AG04449 (cell line): ENCODE measurements at regions of chr2 and their contacts with region 1.

Region 1: DNA sequence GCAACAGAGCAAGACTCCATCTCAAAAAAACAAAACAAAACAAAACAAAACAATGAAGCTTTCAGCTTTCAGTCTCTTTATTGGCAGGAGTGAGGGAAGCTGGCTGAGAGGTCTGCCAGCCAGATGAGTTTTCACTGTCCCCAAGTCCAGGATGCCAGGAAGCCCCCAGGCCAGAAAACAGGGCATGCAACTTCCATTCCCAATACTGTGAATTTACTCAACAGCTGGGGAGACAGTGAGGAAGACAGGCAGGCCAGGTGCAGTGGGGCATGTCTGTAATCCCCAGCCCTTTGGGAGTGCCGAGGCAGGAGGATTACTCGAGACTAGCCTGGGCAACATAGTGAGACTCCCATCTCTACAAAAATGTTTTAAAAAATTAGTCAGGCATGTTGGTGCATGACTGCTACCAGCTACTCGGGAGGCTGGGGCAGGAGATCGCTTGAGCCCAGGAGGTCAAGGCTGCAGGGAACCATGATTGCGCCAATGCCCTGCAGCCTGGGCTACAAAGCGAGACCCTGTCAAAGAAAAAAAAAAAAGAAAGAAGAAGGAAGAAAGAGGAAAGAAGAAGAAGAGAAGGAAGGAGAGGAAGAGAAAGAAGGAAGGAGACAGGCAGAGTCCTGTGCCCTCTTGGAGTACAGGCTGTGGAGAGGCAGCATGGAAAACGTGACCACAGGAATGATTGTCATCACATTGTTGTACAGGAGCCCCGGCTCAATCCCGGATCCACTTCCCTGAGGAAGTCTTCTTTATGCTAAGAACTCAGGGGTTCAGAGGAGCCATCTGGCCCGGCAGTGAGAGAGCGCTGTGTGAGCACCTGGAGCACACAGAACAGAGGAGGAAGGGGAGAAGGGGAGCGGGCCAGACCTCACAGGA is 29.2 kb upstream of the POMC start:
- DNase-seq: no peak
- H3K4me3 ChIP-seq: no peak overlapping the region
- CTCF ChIP-seq: no peak

Region 2: GRCh38 chr2:24409700-24410556 is 787.6 kb before region 1 on chr2:
- CTCF ChIA-PET with region 1: interaction called, 21 read pairs
- POLR2A ChIA-PET with region 1: no interaction called
- DNase-seq: peak; percentile 17
- H3K4me3 ChIP-seq: no peak overlapping the region
- CTCF ChIP-seq: peak; percentile 73

Region 3: GRCh38 chr2:24984912-24985311 is 212.7 kb before region 1 on chr2:
- CTCF ChIA-PET with region 1: interaction called, 120 read pairs
- POLR2A ChIA-PET with region 1: no interaction called
- DNase-seq: no peak
- H3K4me3 ChIP-seq: no peak overlapping the region
- CTCF ChIP-seq: no peak

Region 4: DNA sequence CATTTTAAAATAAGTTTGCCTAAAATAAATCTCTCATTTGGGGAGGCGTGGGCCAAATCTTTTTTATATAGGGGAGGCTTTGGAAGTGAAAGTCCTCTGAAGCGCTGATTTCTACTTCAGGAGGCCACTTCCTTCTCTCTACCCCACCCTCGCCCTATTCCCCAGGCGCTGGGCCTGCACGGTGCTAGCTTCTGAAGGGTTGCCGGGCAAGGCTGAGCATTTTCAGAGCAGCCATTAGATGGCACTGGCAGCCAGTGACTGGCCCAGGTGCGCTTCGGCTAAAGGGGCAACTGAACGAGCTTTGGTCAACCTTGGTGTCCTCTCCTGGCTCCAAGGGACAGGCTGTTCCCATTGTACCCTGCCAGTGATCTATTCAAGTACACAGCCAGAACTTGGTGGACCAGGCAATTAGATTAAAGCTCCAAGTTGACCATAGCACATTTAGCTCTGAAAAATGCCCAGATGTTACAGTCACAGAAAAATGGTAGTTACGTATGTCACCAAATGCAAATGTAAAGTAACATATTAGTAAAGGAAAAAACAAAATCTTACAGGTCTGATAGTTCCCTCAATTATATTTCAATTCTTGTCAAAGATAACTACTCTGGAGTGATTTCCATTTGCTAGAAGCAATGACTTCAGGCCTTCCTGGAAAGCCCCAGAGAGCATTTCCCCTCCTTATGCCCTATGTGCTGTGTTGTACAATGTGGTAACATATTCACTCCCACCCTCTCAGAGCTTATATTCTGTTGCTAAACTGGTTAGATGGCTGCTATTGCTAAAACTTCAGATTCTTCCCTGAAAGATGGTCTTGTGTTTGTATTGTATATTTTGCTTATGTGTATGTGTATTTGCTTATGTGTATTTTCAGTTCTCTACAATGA is 31.3 kb before region 1 on chr2:
- CTCF ChIA-PET with region 1: interaction called, 37 read pairs
- POLR2A ChIA-PET with region 1: no interaction called
- DNase-seq: no peak
- H3K4me3 ChIP-seq: no peak overlapping the region
- CTCF ChIP-seq: peak; percentile 20

Region 5: GRCh38 chr2:25228848-25229278 is 31.3 kb after region 1 on chr2:
- CTCF ChIA-PET with region 1: interaction called, 15 read pairs
- POLR2A ChIA-PET with region 1: no interaction called
- DNase-seq: no peak
- H3K4me3 ChIP-seq: no peak overlapping the region
- CTCF ChIP-seq: peak; percentile 80

Region 6: GRCh38 chr2:25286025-25286400 is 88.4 kb after region 1 on chr2:
- CTCF ChIA-PET with region 1: no interaction called
- POLR2A ChIA-PET with region 1: no interaction called
- DNase-seq: no peak
- H3K4me3 ChIP-seq: no peak overlapping the region
- CTCF ChIP-seq: no peak

Region 7: GRCh38 chr2:25297738-25298137 is 100.2 kb after region 1 on chr2:
- CTCF ChIA-PET with region 1: no interaction called
- POLR2A ChIA-PET with region 1: no interaction called
- DNase-seq: no peak
- H3K4me3 ChIP-seq: no peak overlapping the region
- CTCF ChIP-seq: no peak